Activated B cell treated with CpG ODN at 0.5 μM for 24 hours (primary cell): ENCODE measurements at regions of chr10 and their contacts with region 1.

Region 1: DNA sequence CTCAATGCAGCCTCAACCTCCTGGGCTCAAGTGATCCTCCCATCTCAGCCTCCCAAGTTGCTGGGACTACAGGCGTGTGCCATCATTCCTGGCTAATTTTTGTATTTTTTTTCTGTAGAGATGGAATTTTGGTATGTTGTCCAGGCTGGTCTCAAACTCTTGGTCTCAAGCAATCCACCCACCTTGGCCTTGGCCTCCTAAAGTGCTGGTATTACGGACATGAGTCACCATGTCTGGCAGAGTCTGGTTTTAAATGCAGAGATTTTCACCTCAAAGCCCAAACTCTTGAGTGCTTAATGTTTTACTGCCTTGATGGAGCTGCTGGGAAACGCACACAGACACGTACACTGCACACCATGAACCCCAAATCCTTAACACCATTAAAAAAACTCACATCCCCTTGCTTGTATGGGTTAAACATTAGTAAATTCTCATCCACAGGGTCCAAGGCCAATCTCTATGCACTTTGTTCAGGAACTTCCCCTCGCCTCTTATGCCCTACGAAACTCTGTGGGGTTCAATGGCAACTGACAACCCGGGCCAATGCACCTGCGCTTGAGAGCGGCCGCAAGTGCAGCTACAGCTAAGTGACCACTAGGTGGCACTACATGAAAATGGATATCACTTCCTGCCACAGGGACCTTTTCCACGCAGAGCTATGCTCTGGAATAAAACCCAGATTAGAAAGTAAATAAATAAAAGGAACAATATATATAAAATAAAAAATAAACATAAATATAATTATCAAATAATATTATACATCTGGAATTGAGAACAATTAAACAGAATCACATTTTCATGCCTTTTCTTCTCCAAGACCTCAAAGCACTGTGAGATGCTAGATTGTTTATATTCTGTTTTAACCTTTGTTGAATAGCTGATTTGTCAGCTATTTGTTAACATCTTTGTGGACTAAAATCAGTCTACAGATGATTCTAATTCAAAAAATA is 66.9 kb upstream of the AFAP1L2 start:
- DNase-seq: peak; percentile 22
- ATAC-seq: peak; percentile 93
- H3K4me3 Mint-ChIP-seq: no peak overlapping the region
- H3K27ac Mint-ChIP-seq: peak overlapping the region; percentile 53
- H3K4me1 Mint-ChIP-seq: peaks cover 17% of the 10 kb centered on the region
- H3K27me3 Mint-ChIP-seq: no peaks in the 10 kb centered on the region
- CTCF ChIP-seq: peak; percentile 51

Region 2: DNA sequence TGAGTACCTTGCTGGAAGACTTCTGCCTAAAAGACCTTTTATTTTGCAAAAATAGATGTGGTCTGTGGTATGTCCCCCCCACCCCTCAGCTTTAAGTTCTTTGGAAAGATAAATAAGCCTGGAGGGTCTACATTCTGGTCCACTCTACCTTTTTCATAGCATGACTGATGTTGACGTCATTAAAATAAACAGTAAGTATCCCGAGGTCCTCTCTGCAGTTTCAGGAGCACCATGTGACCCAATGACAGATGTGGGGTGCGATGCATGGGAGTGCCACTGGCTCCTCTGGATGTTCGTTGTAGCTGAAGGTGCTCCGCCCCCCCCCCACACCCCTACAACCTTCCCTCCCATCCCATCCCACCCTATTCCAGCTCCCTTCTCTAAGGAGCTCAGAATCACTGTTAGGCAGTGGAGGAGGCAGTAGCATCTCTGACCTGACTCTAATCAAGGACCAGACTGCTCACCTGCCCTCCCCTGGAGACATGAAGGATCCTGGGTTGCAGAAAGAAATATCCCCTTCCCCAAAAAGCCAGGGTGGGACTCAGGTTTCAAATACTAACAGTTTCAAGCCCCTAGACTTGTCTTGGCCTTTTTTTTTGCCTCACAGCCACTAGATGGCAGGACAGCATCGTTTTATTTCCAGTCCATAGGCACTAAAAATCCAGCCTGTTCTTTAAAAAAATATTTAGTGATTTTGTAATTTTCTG is 766.4 kb before region 1 on chr10:
- CTCF ChIA-PET with region 1: no interaction called
- POLR2A ChIA-PET with region 1: no interaction called
- intact Hi-C with region 1: loop called (anchors 10 kb)
- DNase-seq: no peak
- ATAC-seq: no peak
- H3K4me3 Mint-ChIP-seq: no peak overlapping the region
- H3K27ac Mint-ChIP-seq: no peak overlapping the region
- H3K4me1 Mint-ChIP-seq: peaks cover 13% of the 10 kb centered on the region
- H3K27me3 Mint-ChIP-seq: no peaks in the 10 kb centered on the region
- CTCF ChIP-seq: no peak

Region 3: DNA sequence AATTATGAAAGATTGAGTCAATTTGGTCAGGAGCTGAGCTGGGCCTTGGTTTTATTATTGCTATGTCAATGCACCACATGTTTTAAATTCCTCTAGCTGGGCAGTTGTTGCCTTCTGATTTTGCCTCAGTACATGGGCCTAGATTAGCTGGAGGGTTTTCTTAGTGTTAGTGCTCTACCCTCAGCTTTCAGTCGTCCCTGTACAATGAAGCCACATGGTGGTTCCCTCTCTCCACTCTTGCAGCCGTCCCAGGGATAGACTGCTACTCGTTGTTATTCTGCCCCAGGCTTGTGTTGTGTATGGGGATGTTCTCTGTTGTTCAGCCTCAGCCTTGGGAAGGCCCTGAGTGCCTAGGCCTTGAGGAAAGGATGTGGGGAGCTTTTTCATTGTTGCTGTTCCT is 579.8 kb before region 1 on chr10:
- CTCF ChIA-PET with region 1: no interaction called
- POLR2A ChIA-PET with region 1: no interaction called
- intact Hi-C with region 1: no loop called
- DNase-seq: no peak
- ATAC-seq: no peak
- H3K4me3 Mint-ChIP-seq: no peak overlapping the region
- H3K27ac Mint-ChIP-seq: no peak overlapping the region
- H3K4me1 Mint-ChIP-seq: peaks cover 3% of the 10 kb centered on the region
- H3K27me3 Mint-ChIP-seq: no peaks in the 10 kb centered on the region
- CTCF ChIP-seq: no peak

Region 4: DNA sequence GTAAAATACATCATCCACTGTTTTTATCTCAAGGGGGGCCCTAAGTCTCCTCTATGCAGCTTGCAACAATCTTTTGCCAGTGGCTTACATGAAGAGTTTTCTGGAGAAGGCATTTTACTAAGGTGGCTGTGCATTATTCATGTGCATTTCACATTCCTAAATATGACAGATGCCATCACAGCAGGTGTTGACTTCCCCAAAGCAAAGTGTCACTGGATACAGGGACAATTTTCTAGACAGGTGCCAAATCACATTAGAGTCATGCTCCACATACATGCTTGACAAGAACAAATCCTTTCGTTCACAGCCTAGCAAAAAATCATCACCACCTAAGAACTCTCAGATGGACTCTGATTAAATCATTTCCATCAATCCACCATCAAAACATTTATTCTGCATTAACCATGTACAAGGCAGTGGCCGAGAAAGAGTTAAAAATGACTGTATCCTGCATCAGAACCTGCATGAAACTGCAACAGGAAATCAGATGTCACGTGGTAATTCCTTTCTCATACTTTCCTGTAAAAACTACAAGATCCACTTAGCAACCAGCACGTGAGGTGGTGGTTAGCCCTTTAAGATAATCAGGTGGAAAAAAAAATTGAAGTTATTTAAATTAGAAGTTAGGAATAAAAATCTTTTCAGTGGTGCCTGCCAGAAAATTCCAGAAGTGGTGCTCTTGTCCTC is 21.3 kb after region 1 on chr10:
- CTCF ChIA-PET with region 1: interaction called, 18 read pairs
- POLR2A ChIA-PET with region 1: interaction called, 4 read pairs
- intact Hi-C with region 1: no loop called
- DNase-seq: no peak
- ATAC-seq: no peak
- H3K4me3 Mint-ChIP-seq: peak overlapping the region; percentile 39
- H3K27ac Mint-ChIP-seq: peak overlapping the region; percentile 50
- H3K4me1 Mint-ChIP-seq: peaks cover 54% of the 10 kb centered on the region
- H3K27me3 Mint-ChIP-seq: no peaks in the 10 kb centered on the region
- CTCF ChIP-seq: no peak

Region 5: GRCh38 chr10:114526504-114527238 is 55.4 kb after region 1 on chr10:
- CTCF ChIA-PET with region 1: interaction called, 24 read pairs
- POLR2A ChIA-PET with region 1: interaction called, 6 read pairs
- intact Hi-C with region 1: loop called (anchors 1 kb)
- DNase-seq: peak; percentile 67
- ATAC-seq: peak; percentile 96
- H3K4me3 Mint-ChIP-seq: peak overlapping the region; percentile 95
- H3K27ac Mint-ChIP-seq: peak overlapping the region; percentile 99
- H3K4me1 Mint-ChIP-seq: peaks cover 63% of the 10 kb centered on the region
- H3K27me3 Mint-ChIP-seq: no peaks in the 10 kb centered on the region
- CTCF ChIP-seq: no peak

Region 6: GRCh38 chr10:114703377-114704107 is 232.3 kb after region 1 on chr10:
- CTCF ChIA-PET with region 1: interaction called, 52 read pairs
- POLR2A ChIA-PET with region 1: no interaction called
- intact Hi-C with region 1: loop called (anchors 1 kb)
- DNase-seq: no peak
- ATAC-seq: peak; percentile 52
- H3K4me3 Mint-ChIP-seq: no peak overlapping the region
- H3K27ac Mint-ChIP-seq: no peak overlapping the region
- H3K4me1 Mint-ChIP-seq: no peaks in the 10 kb centered on the region
- H3K27me3 Mint-ChIP-seq: no peaks in the 10 kb centered on the region
- CTCF ChIP-seq: no peak

Region 7: GRCh38 chr10:114839901-114840300 is 368.7 kb after region 1 on chr10:
- CTCF ChIA-PET with region 1: no interaction called
- POLR2A ChIA-PET with region 1: no interaction called
- intact Hi-C with region 1: no loop called
- DNase-seq: no peak
- ATAC-seq: no peak
- H3K4me3 Mint-ChIP-seq: no peak overlapping the region
- H3K27ac Mint-ChIP-seq: no peak overlapping the region
- H3K4me1 Mint-ChIP-seq: no peaks in the 10 kb centered on the region
- H3K27me3 Mint-ChIP-seq: no peaks in the 10 kb centered on the region
- CTCF ChIP-seq: no peak

Region 8: DNA sequence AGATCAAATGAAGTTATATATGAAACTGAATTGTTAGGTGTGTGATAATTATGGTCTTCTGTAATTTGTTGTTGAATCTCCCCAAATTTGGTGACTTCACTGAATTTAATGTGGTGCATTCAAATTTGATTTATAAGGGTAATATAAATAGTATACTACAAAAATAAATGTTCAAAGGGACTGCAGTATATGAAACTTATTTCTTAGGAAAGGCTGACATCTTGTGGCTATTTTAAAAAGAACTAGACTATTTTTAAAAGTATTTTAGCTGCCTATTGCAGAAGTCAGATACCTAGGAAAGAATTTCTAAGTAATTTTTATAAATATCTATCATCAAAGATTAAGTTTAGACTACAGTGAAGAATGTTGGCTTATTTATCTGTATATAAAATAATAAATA is 658.5 kb after region 1 on chr10:
- CTCF ChIA-PET with region 1: no interaction called
- POLR2A ChIA-PET with region 1: no interaction called
- intact Hi-C with region 1: loop called (anchors 2 kb)
- DNase-seq: no peak
- ATAC-seq: no peak
- H3K4me3 Mint-ChIP-seq: no peak overlapping the region
- H3K27ac Mint-ChIP-seq: no peak overlapping the region
- H3K4me1 Mint-ChIP-seq: no peaks in the 10 kb centered on the region
- H3K27me3 Mint-ChIP-seq: peaks cover 2% of the 10 kb centered on the region
- CTCF ChIP-seq: no peak